Ascending aorta (tissue), 2 donors: ENCODE measurements at regions of chr17 and their contacts with region 1.

Region 1: DNA sequence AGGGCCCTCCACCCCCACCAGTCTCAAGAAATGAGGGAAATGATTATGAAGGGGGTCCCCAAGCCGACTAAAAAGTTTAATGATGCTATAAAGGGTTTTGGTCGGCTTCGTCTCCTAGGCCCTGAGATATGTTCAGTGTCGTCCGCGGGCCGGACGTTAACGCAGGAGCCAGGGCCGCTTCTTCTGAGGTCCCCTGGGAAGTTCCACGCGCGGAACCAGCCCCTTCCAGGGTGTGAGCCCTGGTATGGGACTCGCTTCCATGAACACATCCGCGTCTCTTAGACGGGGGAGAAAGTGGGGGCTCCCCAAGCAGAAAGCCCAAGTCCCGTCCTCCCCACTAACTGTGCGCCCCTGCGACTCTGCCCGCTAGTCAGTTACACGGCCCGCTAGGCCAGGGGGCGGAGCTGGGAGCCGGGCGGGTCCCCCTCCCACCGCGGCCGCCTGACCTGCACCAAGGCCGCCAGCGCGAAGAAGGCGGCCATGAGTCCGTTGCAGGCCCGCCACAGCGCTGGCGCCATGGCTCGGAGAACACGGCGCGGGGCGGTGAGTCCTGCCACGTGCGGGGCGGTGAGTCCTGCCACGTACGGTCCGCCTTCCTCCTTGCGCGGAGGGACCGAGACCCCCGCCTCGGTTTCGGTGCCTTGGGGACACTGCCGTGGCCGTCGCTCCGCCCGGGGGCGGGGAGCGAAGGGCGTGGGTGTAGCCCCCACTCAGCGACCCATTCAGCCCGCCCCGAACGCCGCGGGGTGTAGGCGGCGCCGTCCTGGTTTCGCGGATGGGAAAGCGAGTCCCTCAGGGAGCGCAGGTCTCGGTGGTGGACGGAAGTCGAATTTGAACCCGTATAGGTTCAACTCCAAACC is at the start of gene TMEM220:
- DNase-seq: peak; percentile 29 to 90
- H3K4me3 ChIP-seq: peak within 1 kb of the TSS; percentile 54 to 83
- H3K27ac ChIP-seq: peak within 1 kb of the TSS; percentile 89 to 97
- H3K4me1 ChIP-seq: peaks cover 2 to 3% of the 10 kb centered on the region in 2 donors
- H3K27me3 ChIP-seq: no peaks in the 10 kb centered on the region
- CTCF ChIP-seq: no peak
- total RNA-seq, gene TMEM220: 0.53 TPM

Region 2: DNA sequence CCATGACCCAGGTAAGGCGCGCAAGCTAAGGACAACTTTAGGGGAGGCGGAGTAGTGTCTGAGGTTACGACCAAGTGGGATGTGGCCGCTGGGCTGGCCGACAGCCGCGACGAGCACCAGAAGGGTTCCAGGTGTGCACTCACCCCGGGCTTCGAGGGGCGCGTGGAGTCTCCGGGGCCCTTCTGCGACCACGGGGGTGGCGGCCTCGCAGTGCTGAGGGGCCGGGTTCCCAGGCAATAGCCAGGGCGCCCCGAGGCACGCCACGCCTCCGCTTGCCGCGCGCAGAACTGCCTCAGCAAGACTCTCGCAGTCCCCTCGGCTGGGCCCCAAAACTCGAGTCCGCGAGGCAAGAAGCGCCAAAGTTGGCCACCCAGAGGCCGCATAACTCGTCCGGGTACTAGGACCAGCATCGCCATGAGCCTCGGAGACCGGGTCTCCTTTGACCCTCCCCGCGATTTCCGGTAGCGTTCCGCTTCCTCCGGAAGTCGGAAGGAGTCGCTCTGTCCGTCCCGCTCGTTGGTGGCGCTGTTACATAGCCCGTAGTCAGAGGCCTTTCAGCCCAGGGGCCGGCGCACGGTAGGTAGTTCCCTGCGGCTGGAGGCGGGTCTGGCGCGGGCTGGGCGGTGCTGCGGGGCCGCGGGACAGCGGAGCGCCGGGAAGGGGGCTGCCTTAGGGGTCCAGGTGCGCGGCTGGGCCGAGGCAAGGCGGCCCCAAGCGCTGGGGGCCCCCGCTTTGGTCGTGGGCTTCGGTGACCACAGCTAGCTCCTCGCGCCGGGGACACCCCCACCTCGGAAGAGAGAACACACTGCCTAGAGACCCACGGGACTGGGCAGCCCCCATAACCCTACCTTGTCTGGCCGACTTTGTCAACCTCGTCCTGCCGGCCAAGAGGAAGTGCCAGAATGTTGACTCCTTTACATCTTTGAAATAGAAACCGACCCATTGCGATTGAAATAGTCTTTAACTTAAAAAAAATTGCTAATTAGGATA is 32.2 kb before region 1 on chr17 and contains the starts of genes ADPRM and SCO1:
- intact Hi-C with region 1: loop called (anchors 2 kb)
- DNase-seq: peak; percentile 79 to 97
- H3K4me3 ChIP-seq: peak within 1 kb of the TSS; percentile 99 to 100
- H3K27ac ChIP-seq: peak within 1 kb of the TSS; percentile 94 to 97
- H3K4me1 ChIP-seq: peaks cover 5 to 18% of the 10 kb centered on the region in 2 donors
- H3K27me3 ChIP-seq: no peaks in the 10 kb centered on the region
- CTCF ChIP-seq: peak in 2 of 3 experiments; percentile 35 to 46
- total RNA-seq, gene ADPRM: not detected
- total RNA-seq, gene SCO1: 173 TPM

Region 3: DNA sequence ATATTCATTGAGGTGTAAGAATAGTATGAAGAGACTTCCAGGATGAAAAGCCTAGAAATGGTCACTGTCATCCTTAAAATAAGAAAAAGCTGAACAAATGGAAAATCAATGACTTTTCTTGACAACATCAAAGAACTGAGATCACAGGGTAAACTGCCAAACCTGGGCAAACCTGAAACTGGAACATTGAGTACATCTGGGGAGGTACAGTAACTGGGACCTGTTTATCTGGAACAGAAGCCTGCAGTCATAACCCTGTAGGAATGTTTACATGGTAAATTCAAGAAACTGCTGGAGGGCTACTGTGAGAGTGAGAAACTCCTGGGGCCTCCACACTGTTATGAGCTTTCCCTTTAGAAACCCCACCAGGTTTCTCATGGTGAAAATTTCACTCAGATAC is 238.4 kb after region 1 on chr17:
- intact Hi-C with region 1: no loop called
- DNase-seq: no peak
- H3K4me3 ChIP-seq: no peak overlapping the region
- H3K27ac ChIP-seq: no peak overlapping the region
- H3K4me1 ChIP-seq: no peaks in the 10 kb centered on the region
- H3K27me3 ChIP-seq: no peaks in the 10 kb centered on the region
- CTCF ChIP-seq: no peak

Region 4: GRCh38 chr17:11308531-11308930 is 579.0 kb after region 1 on chr17:
- intact Hi-C with region 1: loop called (anchors 5 kb)
- DNase-seq: no peak
- H3K4me3 ChIP-seq: no peak overlapping the region
- H3K27ac ChIP-seq: no peak overlapping the region
- H3K4me1 ChIP-seq: no peaks in the 10 kb centered on the region
- H3K27me3 ChIP-seq: no peaks in the 10 kb centered on the region
- CTCF ChIP-seq: no peak